Caco-2 (cell line): ENCODE measurements at regions of chr3 and their contacts with region 1.

Region 1: DNA sequence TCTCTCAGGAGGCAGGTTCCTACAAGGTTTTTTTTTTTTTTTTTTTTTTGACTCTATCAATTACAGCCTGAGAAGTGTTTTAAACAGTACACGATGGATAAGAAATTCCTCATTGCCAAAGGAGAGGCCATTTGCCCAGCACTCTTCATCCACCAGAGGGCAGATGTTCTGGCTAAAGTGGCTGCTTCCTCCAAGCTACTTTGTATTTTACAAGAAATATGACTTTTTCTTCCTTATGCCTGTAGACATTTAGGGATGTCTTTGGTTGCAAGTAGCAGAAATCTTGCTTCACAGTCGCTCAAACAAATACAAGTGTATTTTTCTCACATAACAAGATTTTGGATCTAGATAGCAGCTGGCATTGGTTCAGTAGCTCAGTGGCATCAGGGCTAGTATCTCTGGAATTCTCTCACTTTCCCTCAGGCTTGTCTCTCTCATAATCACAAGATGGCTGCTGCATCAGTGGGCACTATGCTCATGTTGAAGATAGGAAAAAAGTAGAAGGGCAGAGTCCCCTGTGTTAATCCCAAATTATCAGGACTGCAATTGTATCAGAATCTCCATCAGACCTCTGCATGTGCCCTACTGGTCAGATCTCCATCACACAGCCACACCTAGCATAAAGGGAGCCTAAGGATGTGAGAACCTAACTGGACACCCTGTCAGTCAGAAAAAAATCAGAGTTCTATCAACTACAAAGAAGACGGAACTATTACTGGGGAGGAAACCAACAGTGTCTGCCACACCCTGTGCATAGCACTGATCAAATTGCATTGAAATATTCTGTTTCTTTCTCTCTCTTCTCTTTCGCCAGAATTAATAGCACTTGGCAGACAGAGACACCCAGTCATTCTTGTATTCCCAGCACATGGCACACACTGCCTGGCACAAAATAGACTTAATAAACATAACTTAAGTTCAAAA is 138.9 kb upstream of the COL8A1 start:
- DNase-seq: peak in 1 of 2 experiments; percentile 50
- H3K4me3 ChIP-seq: no peak overlapping the region
- H3K4me3 Mint-ChIP-seq: no peak overlapping the region
- H3K27ac Mint-ChIP-seq: no peak overlapping the region
- H3K4me1 ChIP-seq: no peaks in the 10 kb centered on the region
- H3K4me1 Mint-ChIP-seq: no peaks in the 10 kb centered on the region
- H3K27me3 ChIP-seq: no peaks in the 10 kb centered on the region
- H3K27me3 Mint-ChIP-seq: no peaks in the 10 kb centered on the region
- CTCF ChIP-seq: peak; percentile 51 to 86

Region 2: DNA sequence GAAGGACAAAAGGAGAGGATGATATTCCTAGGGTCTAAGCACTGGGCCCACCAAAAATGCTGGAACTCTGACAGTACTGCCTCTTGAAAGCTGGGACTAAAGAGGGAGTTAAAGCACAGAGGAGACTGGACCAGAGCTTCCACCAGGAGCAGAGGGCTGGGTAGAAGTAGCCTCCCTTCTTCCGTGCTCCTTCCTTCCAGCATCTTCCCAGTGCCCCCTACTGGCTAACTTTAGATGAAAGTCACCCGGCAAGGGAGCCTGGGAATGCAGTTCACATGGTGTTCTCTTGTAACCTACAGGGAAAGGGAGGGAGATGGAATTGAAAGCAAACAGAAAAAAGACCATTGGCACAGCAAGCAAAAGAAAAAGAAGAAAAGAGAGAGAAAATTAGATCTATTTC is 32.7 kb after region 1 on chr3:
- CTCF ChIA-PET with region 1: interaction called, 11 read pairs
- POLR2A ChIA-PET with region 1: no interaction called
- intact Hi-C with region 1: loop called (anchors 1 kb)
- DNase-seq: peak; percentile 54 to 66
- H3K4me3 ChIP-seq: no peak overlapping the region
- H3K4me3 Mint-ChIP-seq: no peak overlapping the region
- H3K27ac Mint-ChIP-seq: no peak overlapping the region
- H3K4me1 ChIP-seq: no peaks in the 10 kb centered on the region
- H3K4me1 Mint-ChIP-seq: no peaks in the 10 kb centered on the region
- H3K27me3 ChIP-seq: no peaks in the 10 kb centered on the region
- H3K27me3 Mint-ChIP-seq: no peaks in the 10 kb centered on the region
- CTCF ChIP-seq: peak; percentile 51 to 70

Region 3: GRCh38 chr3:99686955-99687612 is 187.6 kb after region 1 on chr3:
- CTCF ChIA-PET with region 1: no interaction called
- POLR2A ChIA-PET with region 1: no interaction called
- intact Hi-C with region 1: loop called (anchors 1 kb)
- DNase-seq: peak; percentile 56 to 65
- H3K4me3 ChIP-seq: no peak overlapping the region
- H3K4me3 Mint-ChIP-seq: no peak overlapping the region
- H3K27ac Mint-ChIP-seq: no peak overlapping the region
- H3K4me1 ChIP-seq: no peaks in the 10 kb centered on the region
- H3K4me1 Mint-ChIP-seq: no peaks in the 10 kb centered on the region
- H3K27me3 ChIP-seq: no peaks in the 10 kb centered on the region; the same call in 1 of the 2 replicates
- H3K27me3 Mint-ChIP-seq: peaks cover 2% of the 10 kb centered on the region
- CTCF ChIP-seq: peak; percentile 54 to 72

Region 4: GRCh38 chr3:99753268-99753975 is 253.9 kb after region 1 on chr3:
- CTCF ChIA-PET with region 1: interaction called, 8 read pairs
- POLR2A ChIA-PET with region 1: no interaction called
- intact Hi-C with region 1: loop called (anchors 1 kb)
- DNase-seq: peak in 1 of 2 experiments; percentile 41
- H3K4me3 ChIP-seq: no peak overlapping the region
- H3K4me3 Mint-ChIP-seq: no peak overlapping the region
- H3K27ac Mint-ChIP-seq: no peak overlapping the region
- H3K4me1 ChIP-seq: no peaks in the 10 kb centered on the region
- H3K4me1 Mint-ChIP-seq: no peaks in the 10 kb centered on the region
- H3K27me3 ChIP-seq: no peaks in the 10 kb centered on the region; the same call in 1 of the 2 replicates
- H3K27me3 Mint-ChIP-seq: peaks cover 13% of the 10 kb centered on the region
- CTCF ChIP-seq: peak; percentile 68

Region 5: DNA sequence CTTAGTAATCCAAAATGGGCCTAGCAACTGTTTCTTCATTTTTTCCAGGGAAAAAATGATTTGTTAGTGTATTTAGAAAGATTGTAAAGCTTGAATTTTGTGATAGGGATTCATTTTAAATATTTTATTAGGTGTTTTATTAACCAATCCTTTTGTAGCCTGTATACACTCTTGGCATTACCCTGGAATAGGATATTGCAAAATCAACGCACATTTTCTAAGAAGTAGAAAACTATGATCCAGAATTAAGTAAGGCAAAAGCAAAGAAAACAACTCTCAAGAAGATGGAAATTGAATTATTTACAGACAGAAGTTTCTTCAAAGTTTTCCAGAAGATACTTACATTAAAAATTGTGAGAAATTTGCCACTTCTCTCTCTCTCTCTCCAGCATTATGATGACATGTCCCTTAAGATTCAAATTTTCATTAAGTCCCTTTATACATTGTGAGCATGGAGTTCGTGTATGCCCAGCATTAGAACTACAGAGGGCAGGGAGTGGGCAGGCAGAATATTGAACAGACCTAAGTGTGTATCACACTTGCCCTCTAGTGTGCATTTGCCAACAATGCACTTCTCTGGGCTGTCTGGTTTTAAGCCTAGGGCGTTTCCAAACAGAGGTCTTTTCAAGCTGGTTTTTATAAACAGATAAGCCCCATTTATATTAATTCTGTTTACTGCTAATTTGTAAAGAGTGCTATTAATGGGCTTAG is 289.7 kb after region 1 on chr3:
- CTCF ChIA-PET with region 1: no interaction called
- POLR2A ChIA-PET with region 1: no interaction called
- intact Hi-C with region 1: loop called (anchors 1 kb)
- DNase-seq: peak in 1 of 2 experiments; percentile 35
- H3K4me3 ChIP-seq: no peak overlapping the region
- H3K4me3 Mint-ChIP-seq: no peak overlapping the region
- H3K27ac Mint-ChIP-seq: no peak overlapping the region
- H3K4me1 ChIP-seq: no peaks in the 10 kb centered on the region
- H3K4me1 Mint-ChIP-seq: no peaks in the 10 kb centered on the region
- H3K27me3 ChIP-seq: no peaks in the 10 kb centered on the region
- H3K27me3 Mint-ChIP-seq: peaks cover 16% of the 10 kb centered on the region
- CTCF ChIP-seq: peak; percentile 53 to 72